MCF 10A (cell line): ENCODE measurements at regions of chr7 and their contacts with region 1.

Region 1: DNA sequence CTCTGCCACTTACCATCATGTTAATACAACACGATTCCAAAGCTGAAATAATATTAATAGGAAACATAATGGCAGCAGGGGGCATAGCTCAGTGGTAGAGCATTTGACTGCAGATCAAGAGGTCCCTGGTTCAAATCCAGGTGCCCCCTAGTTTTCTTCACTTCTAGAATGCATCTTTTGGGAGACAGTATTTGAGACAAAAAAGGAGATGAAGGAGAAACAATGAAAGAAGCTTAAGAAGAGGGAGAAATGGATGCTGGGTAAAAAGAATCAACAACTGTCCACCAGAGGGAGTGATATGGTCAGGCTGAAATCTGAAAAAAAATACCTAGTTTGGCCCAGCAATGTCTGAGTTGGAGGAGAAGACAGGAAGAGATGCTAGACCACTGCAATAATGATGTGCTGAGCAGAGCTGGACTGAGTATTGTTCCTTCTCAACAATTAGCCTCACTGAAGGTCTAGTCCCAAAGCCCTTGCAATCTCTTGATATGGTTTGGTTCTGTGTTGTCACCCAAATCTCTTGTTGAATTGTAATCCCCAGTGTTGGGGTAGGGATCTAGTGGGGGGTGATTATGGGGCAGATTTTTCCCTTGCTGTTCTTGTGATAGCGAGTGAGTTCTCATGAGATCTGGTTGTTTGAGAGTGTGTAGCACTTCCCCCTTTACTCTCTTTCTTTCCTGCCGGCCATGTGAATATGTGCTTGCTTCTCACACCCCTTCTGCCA is 48.3 kb downstream of the ZNF783 start:
- DNase-seq: peak; percentile 65
- H3K4me3 Mint-ChIP-seq: no peak overlapping the region
- H3K27ac Mint-ChIP-seq: no peak overlapping the region
- H3K4me1 Mint-ChIP-seq: no peaks in the 10 kb centered on the region
- H3K27me3 Mint-ChIP-seq: peaks cover 15% of the 10 kb centered on the region
- CTCF ChIP-seq: peak; percentile 57

Region 2: DNA sequence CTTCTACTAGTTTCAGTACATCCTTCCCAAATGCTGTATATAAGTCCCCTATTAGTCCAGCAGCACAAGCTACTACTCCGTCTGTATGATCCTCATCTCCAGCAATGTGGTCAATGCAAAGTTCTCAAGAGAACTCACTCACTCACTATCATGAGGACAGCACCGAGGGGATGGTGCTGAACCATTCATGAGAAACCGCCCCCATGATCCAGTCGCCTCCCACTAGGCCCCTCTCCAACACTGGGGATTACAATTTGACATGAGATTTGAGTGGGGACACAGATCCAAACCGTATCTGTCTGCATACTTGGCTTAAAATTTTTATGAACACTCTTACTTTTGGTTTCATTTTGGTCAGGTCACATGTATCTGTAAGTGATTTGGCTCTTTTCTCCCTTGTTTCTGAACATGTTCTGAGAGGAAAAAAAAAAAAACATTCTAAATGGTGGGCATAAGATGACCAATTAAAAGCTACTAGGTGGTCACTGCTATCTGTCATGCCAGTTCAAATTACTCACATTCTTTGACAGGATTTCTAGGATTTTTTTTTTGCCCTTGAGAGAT is 11.8 kb after region 1 on chr7:
- CTCF ChIA-PET with region 1: interaction called, 13 read pairs
- POLR2A ChIA-PET with region 1: interaction called, 3 read pairs
- intact Hi-C with region 1: no loop called
- DNase-seq: no peak
- H3K4me3 Mint-ChIP-seq: peak overlapping the region; percentile 5
- H3K27ac Mint-ChIP-seq: no peak overlapping the region
- H3K4me1 Mint-ChIP-seq: no peaks in the 10 kb centered on the region
- H3K27me3 Mint-ChIP-seq: peaks cover 35% of the 10 kb centered on the region
- CTCF ChIP-seq: no peak

Region 3: GRCh38 chr7:149414745-149415390 is 104.6 kb after region 1 on chr7:
- CTCF ChIA-PET with region 1: interaction called, 13 read pairs
- POLR2A ChIA-PET with region 1: no interaction called
- intact Hi-C with region 1: loop called (anchors 5 kb)
- DNase-seq: no peak
- H3K4me3 Mint-ChIP-seq: no peak overlapping the region
- H3K27ac Mint-ChIP-seq: no peak overlapping the region
- H3K4me1 Mint-ChIP-seq: no peaks in the 10 kb centered on the region
- H3K27me3 Mint-ChIP-seq: no peaks in the 10 kb centered on the region
- CTCF ChIP-seq: no peak

Region 4: GRCh38 chr7:149440222-149440621 is 129.9 kb after region 1 on chr7:
- CTCF ChIA-PET with region 1: interaction called, 12 read pairs
- POLR2A ChIA-PET with region 1: interaction called, 4 read pairs
- intact Hi-C with region 1: no loop called
- DNase-seq: no peak
- H3K4me3 Mint-ChIP-seq: no peak overlapping the region
- H3K27ac Mint-ChIP-seq: no peak overlapping the region
- H3K4me1 Mint-ChIP-seq: no peaks in the 10 kb centered on the region
- H3K27me3 Mint-ChIP-seq: no peaks in the 10 kb centered on the region
- CTCF ChIP-seq: no peak

Region 5: DNA sequence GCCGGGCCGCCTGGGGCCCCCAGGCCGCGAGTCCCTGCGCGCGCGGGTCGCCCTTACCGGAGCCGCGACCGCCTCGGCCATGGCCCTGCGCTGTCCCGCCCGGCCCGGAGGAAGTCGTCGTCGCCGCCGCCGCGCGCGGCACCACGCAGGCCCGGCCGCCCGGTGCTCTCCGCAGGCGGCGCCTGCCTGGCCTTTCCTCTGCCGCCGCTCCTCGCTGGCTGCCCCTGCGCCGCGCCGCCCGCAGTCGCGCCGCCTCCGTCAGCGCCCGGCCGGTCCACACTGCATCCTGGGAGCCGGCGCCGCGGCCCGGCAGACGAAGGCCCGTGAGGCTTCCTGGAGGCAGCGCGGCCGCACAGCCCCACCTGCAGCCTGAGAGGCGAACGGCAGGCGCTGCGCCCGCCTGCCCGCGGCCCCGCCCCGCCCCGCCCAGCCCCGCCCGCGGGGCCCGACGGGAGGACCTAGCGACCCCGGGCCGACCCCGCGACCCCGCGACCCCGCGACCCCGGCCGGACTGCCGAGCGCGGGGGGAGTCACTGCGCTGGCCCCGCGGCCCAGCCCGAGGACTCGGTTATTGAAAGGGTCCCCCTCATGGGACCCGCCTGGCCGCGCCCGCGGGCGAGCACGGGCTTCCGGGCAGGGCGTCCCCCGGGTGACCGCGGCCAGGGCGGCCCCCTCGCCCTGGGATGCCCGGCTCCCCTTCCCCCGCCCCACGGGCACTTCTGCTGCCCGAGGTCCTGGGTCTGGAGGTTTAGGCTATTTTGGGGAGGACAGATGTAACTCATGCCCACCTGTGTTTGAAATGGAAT is 187.4 kb after region 1 on chr7 and contains the start of gene ZNF746:
- CTCF ChIA-PET with region 1: interaction called, 7 read pairs
- POLR2A ChIA-PET with region 1: no interaction called
- intact Hi-C with region 1: loop called (anchors 1 kb)
- DNase-seq: peak; percentile 82
- H3K4me3 Mint-ChIP-seq: peak within 1 kb of the TSS; percentile 94
- H3K27ac Mint-ChIP-seq: peak within 1 kb of the TSS; percentile 92
- H3K4me1 Mint-ChIP-seq: peaks cover 16% of the 10 kb centered on the region
- H3K27me3 Mint-ChIP-seq: no peaks in the 10 kb centered on the region
- CTCF ChIP-seq: peak; percentile 67
- total RNA-seq, gene ZNF746: 22.0 and 23.7 TPM in 2 replicates

Region 6: DNA sequence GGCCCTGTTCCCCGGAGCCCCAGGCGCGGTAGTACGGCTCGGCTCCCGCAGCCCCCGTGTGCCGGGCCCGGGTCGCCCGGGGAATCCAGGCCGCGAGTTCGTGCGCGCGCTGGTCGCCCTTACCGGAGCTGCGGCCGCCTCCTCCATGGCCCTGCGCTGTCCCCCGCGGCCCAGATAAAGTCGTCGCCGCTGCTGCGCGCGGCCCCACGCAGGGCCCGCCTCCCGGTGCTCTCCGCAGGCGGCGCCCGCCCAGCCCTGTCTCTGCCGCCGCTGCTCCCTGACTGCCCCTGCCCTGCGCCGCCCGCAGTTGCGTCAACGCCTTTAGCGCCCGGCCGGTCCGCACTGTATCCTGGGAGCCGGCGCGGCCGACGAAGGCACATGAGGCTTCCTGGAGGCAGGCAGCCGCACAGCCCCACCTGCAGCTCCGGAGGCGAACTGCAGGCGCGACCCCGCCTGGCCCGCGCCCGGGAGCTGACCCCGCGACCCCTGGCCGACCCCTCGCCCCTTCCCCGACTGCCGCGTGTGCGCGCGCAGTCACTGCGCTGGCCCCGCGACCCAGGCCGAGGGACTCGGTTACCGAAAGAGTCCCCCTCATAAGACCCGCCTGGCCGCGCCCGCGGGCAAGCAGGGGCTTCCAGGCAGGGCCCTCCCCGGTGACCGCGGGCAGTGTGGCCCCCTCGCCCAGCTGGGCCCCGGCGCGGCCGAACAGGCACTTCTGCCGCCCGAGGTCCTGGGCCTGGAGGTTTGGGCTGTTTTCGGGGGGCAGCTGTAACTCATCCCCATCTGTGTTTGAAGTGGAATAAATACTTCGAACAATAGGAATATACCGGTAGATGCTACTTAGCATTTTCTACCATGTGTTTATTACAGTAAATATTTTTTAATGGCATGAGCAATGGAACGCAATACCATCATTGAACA is 314.4 kb after region 1 on chr7:
- CTCF ChIA-PET with region 1: interaction called, 10 read pairs
- POLR2A ChIA-PET with region 1: interaction called, 3 read pairs
- intact Hi-C with region 1: loop called (anchors 1 kb)
- DNase-seq: peak; percentile 92
- H3K4me3 Mint-ChIP-seq: peak overlapping the region; percentile 94
- H3K27ac Mint-ChIP-seq: peak overlapping the region; percentile 78
- H3K4me1 Mint-ChIP-seq: peaks cover 21% of the 10 kb centered on the region
- H3K27me3 Mint-ChIP-seq: peaks cover 24% of the 10 kb centered on the region
- CTCF ChIP-seq: peak; percentile 92